Gastrocnemius medialis (tissue), 4 donors: ENCODE measurements at regions of chr11 and their contacts with region 1.

Region 1: GRCh38 chr11:15650105-15650938 is 535.6 kb downstream of the INSC start:
- DNase-seq: peak; percentile 79 to 83
- ATAC-seq: peak; percentile 92
- H3K4me3 ChIP-seq: peak overlapping the region; percentile 44 to 56 (median 50)
- H3K27ac ChIP-seq: peak overlapping the region; percentile 50 to 72 (median 61)
- H3K4me1 ChIP-seq: peaks cover 9 to 23% of the 10 kb centered on the region in 2 donors
- H3K27me3 ChIP-seq: no peaks in the 10 kb centered on the region
- CTCF ChIP-seq: peak; percentile 91 to 98 (median 96)
- POLR2A ChIP-seq: no peak

Region 2: DNA sequence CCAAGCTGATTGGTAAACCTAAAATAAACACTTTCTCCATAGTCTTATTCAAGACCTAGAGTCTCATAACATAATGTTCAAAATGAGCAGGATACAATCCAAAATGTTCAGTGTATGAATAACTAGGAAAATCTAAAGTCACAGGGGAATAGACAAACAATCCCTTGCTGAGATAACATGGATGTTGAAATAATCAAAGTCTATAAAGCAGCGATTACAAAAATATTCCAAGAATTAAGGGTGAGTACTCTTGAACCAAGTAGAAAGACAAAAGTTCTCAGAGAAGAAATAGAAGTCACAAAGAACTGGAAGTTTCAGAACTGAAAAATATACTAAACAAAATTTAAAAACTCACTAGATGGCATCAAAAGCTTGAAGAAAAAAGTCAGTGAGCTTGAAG is 25.4 kb after region 1 on chr11:
- in situ Hi-C with region 1: no loop called
- intact Hi-C with region 1: no loop called
- DNase-seq: no peak
- ATAC-seq: no peak
- H3K4me3 ChIP-seq: no peak overlapping the region
- H3K27ac ChIP-seq: no peak overlapping the region
- H3K4me1 ChIP-seq: no peaks in the 10 kb centered on the region
- H3K27me3 ChIP-seq: no peaks in the 10 kb centered on the region
- CTCF ChIP-seq: no peak
- POLR2A ChIP-seq: no peak

Region 3: GRCh38 chr11:15692669-15693068 is 42.3 kb after region 1 on chr11:
- in situ Hi-C with region 1: no loop called
- intact Hi-C with region 1: no loop called
- DNase-seq: no peak
- ATAC-seq: no peak
- H3K4me3 ChIP-seq: no peak overlapping the region
- H3K27ac ChIP-seq: no peak overlapping the region
- H3K4me1 ChIP-seq: no peaks in the 10 kb centered on the region
- H3K27me3 ChIP-seq: no peaks in the 10 kb centered on the region
- CTCF ChIP-seq: no peak
- POLR2A ChIP-seq: no peak

Region 4: GRCh38 chr11:15705891-15706290 is 55.6 kb after region 1 on chr11:
- in situ Hi-C with region 1: no loop called
- intact Hi-C with region 1: loop called (anchors 1 kb)
- DNase-seq: no peak
- ATAC-seq: peak in 1 of 2 donors; percentile 28
- H3K4me3 ChIP-seq: no peak overlapping the region
- H3K27ac ChIP-seq: no peak overlapping the region
- H3K4me1 ChIP-seq: peaks cover 20 to 21% of the 10 kb centered on the region in 2 donors
- H3K27me3 ChIP-seq: no peaks in the 10 kb centered on the region
- CTCF ChIP-seq: no peak
- POLR2A ChIP-seq: no peak

Region 5: GRCh38 chr11:15750535-15751308 is 100.4 kb after region 1 on chr11:
- in situ Hi-C with region 1: no loop called
- intact Hi-C with region 1: no loop called
- DNase-seq: no peak
- ATAC-seq: no peak
- H3K4me3 ChIP-seq: no peak overlapping the region
- H3K27ac ChIP-seq: no peak overlapping the region
- H3K4me1 ChIP-seq: no peaks in the 10 kb centered on the region
- H3K27me3 ChIP-seq: no peaks in the 10 kb centered on the region
- CTCF ChIP-seq: no peak
- POLR2A ChIP-seq: no peak

Region 6: GRCh38 chr11:15764948-15765347 is 114.6 kb after region 1 on chr11:
- in situ Hi-C with region 1: no loop called
- intact Hi-C with region 1: no loop called
- DNase-seq: no peak
- ATAC-seq: no peak
- H3K4me3 ChIP-seq: no peak overlapping the region
- H3K27ac ChIP-seq: no peak overlapping the region
- H3K4me1 ChIP-seq: peaks cover 0 to 7% of the 10 kb centered on the region in 2 donors
- H3K27me3 ChIP-seq: no peaks in the 10 kb centered on the region
- CTCF ChIP-seq: no peak
- POLR2A ChIP-seq: no peak

Region 7: GRCh38 chr11:15819679-15820286 is 169.5 kb after region 1 on chr11:
- in situ Hi-C with region 1: no loop called
- intact Hi-C with region 1: loop called (anchors 5 kb)
- DNase-seq: peak; percentile 55 to 64
- ATAC-seq: peak; percentile 74 to 83
- H3K4me3 ChIP-seq: no peak overlapping the region
- H3K27ac ChIP-seq: no peak overlapping the region
- H3K4me1 ChIP-seq: peaks cover 33 to 46% of the 10 kb centered on the region in 2 donors
- H3K27me3 ChIP-seq: no peaks in the 10 kb centered on the region
- CTCF ChIP-seq: peak; percentile 66 to 95 (median 82)
- POLR2A ChIP-seq: no peak